Heart right ventricle (tissue), 16 donors: ENCODE measurements at regions of chr19 and their contacts with region 1.

Region 1: DNA sequence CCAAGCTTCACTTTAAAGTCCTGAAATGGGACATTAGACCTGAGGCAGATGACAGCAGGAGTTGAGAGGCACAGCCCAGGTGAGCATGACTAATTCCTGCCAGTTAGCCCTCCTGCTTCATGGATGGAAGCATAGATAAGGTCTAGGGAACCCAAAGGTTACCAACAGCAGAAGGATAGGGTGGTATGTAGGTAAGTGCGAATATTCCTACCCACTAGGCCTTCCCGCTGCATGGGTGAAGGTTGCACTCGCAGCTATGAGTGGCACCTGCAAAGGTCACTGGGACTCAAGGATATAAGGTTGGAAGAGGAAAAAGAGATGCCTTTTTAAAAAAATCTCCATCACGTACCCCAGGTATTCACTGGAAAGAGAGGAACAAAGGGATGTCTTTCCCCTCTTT is 12.2 kb upstream of the MLLT1 start:
- DNase-seq: no peak
- ATAC-seq: no peak
- H3K4me3 ChIP-seq: no peak overlapping the region
- H3K27ac ChIP-seq: no peak overlapping the region
- H3K4me1 ChIP-seq: no peaks in the 10 kb centered on the region
- H3K27me3 ChIP-seq: no peaks in the 10 kb centered on the region
- CTCF ChIP-seq: no peak

Region 2: DNA sequence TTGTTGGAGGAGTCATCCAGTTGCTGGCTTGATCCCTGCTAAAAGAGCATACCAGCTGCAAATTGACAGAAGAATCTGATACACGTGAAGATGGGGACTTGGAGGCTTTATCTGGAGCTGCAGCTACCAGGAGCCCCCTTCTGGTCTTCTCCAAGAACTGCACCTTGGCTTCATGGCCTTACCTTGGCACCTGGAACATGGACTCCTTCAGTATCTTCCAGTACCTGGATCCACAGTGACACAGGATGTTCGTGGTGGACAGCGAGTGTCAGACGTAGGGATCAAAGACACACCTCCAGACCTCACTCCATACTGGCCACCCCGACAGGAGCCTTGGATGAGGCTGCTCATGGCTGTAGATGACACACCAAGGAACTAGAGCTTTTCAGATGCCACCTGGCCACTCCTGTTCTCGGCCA is 166.4 kb before region 1 on chr19:
- intact Hi-C with region 1: loop called in 1 of 10 experiments (anchors 10 kb)
- DNase-seq: peak in 1 of 2 donors; percentile 63
- ATAC-seq: peak; percentile 74 to 91 (median 86)
- H3K4me3 ChIP-seq: no peak overlapping the region
- H3K27ac ChIP-seq: no peak overlapping the region
- H3K4me1 ChIP-seq: no peaks in the 10 kb centered on the region
- H3K27me3 ChIP-seq: no peaks in the 10 kb centered on the region
- CTCF ChIP-seq: peak; percentile 85 to 98 (median 94)

Region 3: GRCh38 chr19:6161271-6161850 is 130.6 kb before region 1 on chr19:
- intact Hi-C with region 1: loop called in 1 of 10 experiments (anchors 5 kb)
- DNase-seq: peak; percentile 18 to 63
- ATAC-seq: peak; percentile 79 to 96 (median 89)
- H3K4me3 ChIP-seq: no peak overlapping the region
- H3K27ac ChIP-seq: peak overlapping the region in 6 of 10 donors; percentile 21 to 63 (median 32)
- H3K4me1 ChIP-seq: peaks cover 0 to 8% (median 0%) of the 10 kb centered on the region in 9 donors
- H3K27me3 ChIP-seq: no peaks in the 10 kb centered on the region
- CTCF ChIP-seq: no peak